ENCODE measurements at regions of chr7 and their contacts with region 1.

Region 1: GRCh38 chr7:135509903-135510602 is at the start of gene CNOT4:
- DNase-seq: peak; percentile 96 to 98 (median 98)
- ATAC-seq: peak; percentile 97
- H3K4me3 ChIP-seq: peak within 1 kb of the TSS; percentile 69
- H3K4me1 ChIP-seq: peaks cover 10% of the 10 kb centered on the region
- CTCF ChIP-seq: no peak
- total RNA-seq, gene CNOT4: 18.3 to 37.2 (median 22.1) TPM

Region 2: GRCh38 chr7:135558337-135558767 is 48.3 kb after region 1 on chr7:
- intact Hi-C with region 1: loop called in 1 of 2 experiments (anchors 5 kb)
- DNase-seq: peak in 2 of 3 donors; percentile 59 to 73
- ATAC-seq: peak; percentile 79
- H3K4me3 ChIP-seq: peak overlapping the region; percentile 56
- H3K4me1 ChIP-seq: peaks cover 5% of the 10 kb centered on the region
- CTCF ChIP-seq: no peak

Measured in mucosa of descending colon (tissue), 3 donors.